Activated CD4-positive, alpha-beta T cell treated with anti-CD3 and anti-CD28 coated beads for 36 hours (primary cell): ENCODE measurements at regions of chr7 and their contacts with region 1.

Region 1: GRCh38 chr7:34928049-34928448 is 109.2 kb downstream of the DPY19L1 start:
- DNase-seq: peak; percentile 79
- ATAC-seq: peak; percentile 36
- H3K4me3 Mint-ChIP-seq: no peak overlapping the region
- H3K27ac Mint-ChIP-seq: no peak overlapping the region
- H3K4me1 Mint-ChIP-seq: no peaks in the 10 kb centered on the region
- H3K27me3 Mint-ChIP-seq: peaks cover 5% of the 10 kb centered on the region

Region 2: GRCh38 chr7:34373940-34374339 is 554.1 kb before region 1 on chr7:
- CTCF ChIA-PET with region 1: no interaction called
- POLR2A ChIA-PET with region 1: no interaction called
- intact Hi-C with region 1: no loop called
- DNase-seq: no peak
- ATAC-seq: no peak
- H3K4me3 Mint-ChIP-seq: no peak overlapping the region
- H3K27ac Mint-ChIP-seq: no peak overlapping the region
- H3K4me1 Mint-ChIP-seq: no peaks in the 10 kb centered on the region
- H3K27me3 Mint-ChIP-seq: no peaks in the 10 kb centered on the region

Region 3: DNA sequence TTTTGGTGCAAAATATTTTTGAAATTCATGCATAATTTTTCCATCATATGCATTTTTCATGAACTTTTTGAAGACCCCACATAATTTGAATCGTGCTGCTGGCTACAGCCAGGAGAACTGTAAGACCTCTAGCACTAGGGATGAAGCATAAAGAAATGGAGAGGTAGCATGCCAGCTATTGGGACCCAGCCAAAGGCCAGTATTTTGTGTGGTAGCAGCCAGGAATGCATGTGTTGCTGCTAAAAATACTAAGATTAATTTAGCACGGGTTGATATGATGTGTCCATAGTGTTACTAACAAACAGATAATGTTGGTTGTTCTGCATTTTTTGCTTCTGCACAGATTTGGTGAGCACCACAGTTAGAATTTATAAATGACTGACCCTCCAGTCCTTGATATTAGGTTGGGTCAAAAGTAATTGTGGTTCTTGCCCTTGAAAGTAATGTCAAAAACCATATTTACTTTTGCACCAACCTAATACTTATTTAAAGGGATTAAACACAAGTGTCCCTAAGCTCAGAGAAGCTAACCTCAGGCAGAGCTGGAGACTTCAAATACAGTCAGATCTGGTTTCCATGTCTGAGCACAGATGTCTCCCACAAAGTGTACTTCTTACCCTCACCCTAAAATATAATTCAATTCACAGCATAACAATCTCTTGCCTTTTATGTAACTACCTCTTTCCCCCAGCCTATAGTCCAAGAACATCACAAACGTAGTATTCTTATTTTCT is 324.2 kb before region 1 on chr7:
- CTCF ChIA-PET with region 1: no interaction called
- POLR2A ChIA-PET with region 1: no interaction called
- intact Hi-C with region 1: no loop called
- DNase-seq: no peak
- ATAC-seq: no peak
- H3K4me3 Mint-ChIP-seq: no peak overlapping the region
- H3K27ac Mint-ChIP-seq: no peak overlapping the region
- H3K4me1 Mint-ChIP-seq: no peaks in the 10 kb centered on the region
- H3K27me3 Mint-ChIP-seq: peaks cover 2% of the 10 kb centered on the region

Region 4: DNA sequence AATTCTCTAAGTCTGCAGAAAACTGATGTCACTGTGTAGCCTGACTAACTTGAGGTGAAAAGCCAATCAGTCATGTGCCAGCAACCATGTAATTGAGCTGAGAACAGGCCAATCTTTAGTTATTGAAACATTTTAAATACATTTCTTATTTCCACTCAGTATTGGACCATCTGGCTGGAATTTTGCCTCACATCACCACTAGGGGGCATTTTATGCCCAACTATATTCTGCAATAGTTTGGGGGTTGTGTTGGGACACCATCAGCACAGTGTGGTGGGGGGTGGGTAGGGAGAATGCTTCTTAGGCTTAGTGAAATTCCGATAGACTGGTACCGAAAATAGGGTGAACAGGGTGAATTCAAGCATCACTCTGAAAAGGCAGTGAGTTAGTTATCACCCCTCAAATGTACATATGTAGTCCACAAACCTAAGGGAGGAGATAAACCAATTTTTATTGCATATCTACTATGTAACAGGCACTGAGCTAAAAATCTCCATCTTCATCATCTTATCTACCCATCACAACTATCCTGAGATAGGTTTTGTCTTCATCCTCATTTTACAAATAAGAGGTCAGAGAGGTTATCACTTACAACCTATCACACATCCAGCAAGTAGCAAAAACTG is 252.2 kb before region 1 on chr7:
- CTCF ChIA-PET with region 1: no interaction called
- POLR2A ChIA-PET with region 1: no interaction called
- intact Hi-C with region 1: loop called in 1 of 2 experiments (anchors 5 kb)
- DNase-seq: peak; percentile 33
- ATAC-seq: no peak
- H3K4me3 Mint-ChIP-seq: no peak overlapping the region
- H3K27ac Mint-ChIP-seq: no peak overlapping the region
- H3K4me1 Mint-ChIP-seq: no peaks in the 10 kb centered on the region
- H3K27me3 Mint-ChIP-seq: no peaks in the 10 kb centered on the region

Region 5: DNA sequence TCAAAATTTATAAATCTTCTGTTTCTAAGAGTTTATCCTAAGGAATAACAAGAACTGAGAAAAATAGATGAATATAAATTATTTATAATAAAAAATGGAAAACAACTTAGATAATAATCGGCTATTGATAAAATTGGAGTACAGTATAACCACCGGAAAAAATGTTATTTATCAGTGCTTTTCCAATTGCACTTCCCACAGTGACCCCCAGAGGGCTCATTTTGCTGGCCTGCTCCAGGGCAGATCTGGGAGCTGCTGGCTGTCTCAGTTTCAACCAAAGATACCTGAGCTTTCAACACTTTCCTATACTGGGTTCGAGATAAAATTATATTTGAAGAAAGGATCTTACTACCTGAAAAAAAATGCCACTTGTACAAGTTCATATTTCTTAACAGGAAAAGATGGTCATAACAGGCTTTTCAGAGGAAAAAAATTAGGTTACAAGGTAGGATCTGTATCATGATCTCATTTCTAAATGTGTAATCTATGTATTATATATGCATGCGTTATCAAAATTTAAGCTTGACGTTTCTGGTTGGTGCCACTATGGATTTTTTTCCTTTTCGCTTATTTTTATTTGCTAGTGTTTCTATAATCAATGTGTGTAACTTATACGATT is 104.3 kb before region 1 on chr7:
- CTCF ChIA-PET with region 1: interaction called, 5 read pairs
- POLR2A ChIA-PET with region 1: no interaction called
- intact Hi-C with region 1: loop called (anchors 2 to 10 kb)
- DNase-seq: peak; percentile 75
- ATAC-seq: peak; percentile 65
- H3K4me3 Mint-ChIP-seq: no peak overlapping the region
- H3K27ac Mint-ChIP-seq: no peak overlapping the region
- H3K4me1 Mint-ChIP-seq: no peaks in the 10 kb centered on the region
- H3K27me3 Mint-ChIP-seq: no peaks in the 10 kb centered on the region

Region 6: DNA sequence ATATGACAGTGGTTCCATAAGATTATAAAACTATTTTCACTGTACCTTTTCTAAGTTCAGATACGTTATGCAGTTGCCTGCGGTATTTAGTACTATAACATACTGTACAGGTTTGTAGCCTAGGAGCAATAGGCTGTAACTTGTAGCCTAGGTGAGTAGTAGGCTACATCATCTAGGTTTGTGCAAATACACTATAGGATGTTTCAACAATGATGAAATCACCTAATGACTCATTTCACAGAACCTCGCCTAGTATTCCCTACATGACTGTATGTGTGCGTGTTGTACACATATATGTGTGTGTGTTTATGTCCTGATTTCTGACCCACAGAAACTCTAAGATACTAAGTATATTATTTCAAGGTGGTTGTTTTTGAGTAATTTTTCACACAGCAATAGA is 627.9 kb after region 1 on chr7:
- CTCF ChIA-PET with region 1: no interaction called
- POLR2A ChIA-PET with region 1: no interaction called
- intact Hi-C with region 1: no loop called
- DNase-seq: no peak
- ATAC-seq: peak; percentile 97
- H3K4me3 Mint-ChIP-seq: no peak overlapping the region
- H3K27ac Mint-ChIP-seq: no peak overlapping the region
- H3K4me1 Mint-ChIP-seq: no peaks in the 10 kb centered on the region
- H3K27me3 Mint-ChIP-seq: peaks cover 5% of the 10 kb centered on the region